Ovary (tissue), 10 donors: ENCODE measurements at regions of chr17 and their contacts with region 1.

Region 1: GRCh38 chr17:1621273-1622228 is 7.1 kb downstream of the SLC43A2 start:
- DNase-seq: no peak
- H3K4me3 ChIP-seq: no peak overlapping the region
- H3K27ac ChIP-seq: no peak overlapping the region
- H3K4me1 ChIP-seq: peaks cover 1% of the 10 kb centered on the region
- H3K27me3 ChIP-seq: no peaks in the 10 kb centered on the region
- CTCF ChIP-seq: no peak
- EP300 ChIP-seq: no peak
- POLR2A ChIP-seq: no peak

Region 2: GRCh38 chr17:1566545-1567199 is 54.9 kb before region 1 on chr17:
- intact Hi-C with region 1: no loop called
- DNase-seq: no peak
- H3K4me3 ChIP-seq: no peak overlapping the region
- H3K27ac ChIP-seq: no peak overlapping the region
- H3K4me1 ChIP-seq: no peaks in the 10 kb centered on the region
- H3K27me3 ChIP-seq: no peaks in the 10 kb centered on the region
- CTCF ChIP-seq: no peak
- EP300 ChIP-seq: no peak
- POLR2A ChIP-seq: no peak

Region 3: GRCh38 chr17:1580979-1581678 is 40.4 kb before region 1 on chr17:
- intact Hi-C with region 1: loop called in 1 of 4 experiments (anchors 2 kb)
- DNase-seq: no peak
- H3K4me3 ChIP-seq: no peak overlapping the region
- H3K27ac ChIP-seq: no peak overlapping the region
- H3K4me1 ChIP-seq: peaks cover 9% of the 10 kb centered on the region
- H3K27me3 ChIP-seq: no peaks in the 10 kb centered on the region
- CTCF ChIP-seq: no peak
- EP300 ChIP-seq: no peak
- POLR2A ChIP-seq: no peak

Region 4: DNA sequence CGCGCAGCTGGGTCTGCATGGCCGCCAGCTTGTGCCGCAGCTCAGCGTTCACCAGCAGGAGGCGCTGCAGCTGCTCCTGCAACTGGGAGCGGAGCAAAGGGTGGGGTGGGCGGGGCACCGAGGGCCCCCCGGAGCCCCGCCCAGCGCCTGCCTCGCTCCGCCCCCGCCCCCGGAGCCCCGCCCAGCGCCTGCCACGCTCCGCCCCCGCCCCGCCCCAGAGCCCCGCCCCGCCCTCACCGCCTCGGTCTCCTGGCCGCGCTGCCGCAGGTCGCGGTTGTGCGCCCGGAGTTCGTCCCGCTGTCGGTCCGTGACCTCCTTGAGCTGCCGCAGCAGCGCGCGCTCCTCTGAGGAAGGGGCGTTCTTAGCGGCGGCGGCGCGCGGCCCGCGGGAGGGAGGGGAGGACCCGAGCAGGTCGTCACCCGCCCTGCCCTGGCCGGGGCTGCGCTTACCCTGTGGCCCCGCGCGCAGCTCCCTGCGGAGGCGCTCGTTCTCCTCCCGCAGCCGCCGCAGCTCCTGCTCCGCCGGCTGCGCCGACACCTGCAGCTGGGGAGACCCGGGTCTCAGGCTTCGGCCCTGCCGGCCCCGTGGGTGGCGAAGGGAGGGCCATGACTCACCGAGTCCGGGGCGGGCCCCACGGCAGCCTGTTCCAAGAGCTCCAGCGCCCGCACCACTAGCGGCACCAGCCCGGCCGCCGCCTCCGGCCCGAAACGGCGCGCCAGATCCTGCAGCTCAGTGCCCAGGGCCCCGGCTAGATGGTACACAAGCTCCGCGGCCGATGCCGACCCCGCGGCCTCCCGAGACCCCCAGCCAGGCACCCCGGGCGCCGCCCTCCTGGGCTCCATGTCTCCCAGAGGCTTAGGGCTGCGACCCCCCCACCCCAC is 27.7 kb after region 1 on chr17:
- intact Hi-C with region 1: no loop called
- DNase-seq: peak; percentile 92 to 97 (median 96)
- H3K4me3 ChIP-seq: peak overlapping the region; percentile 83
- H3K27ac ChIP-seq: peak overlapping the region; percentile 69 to 95
- H3K4me1 ChIP-seq: peaks cover 8% of the 10 kb centered on the region
- H3K27me3 ChIP-seq: no peaks in the 10 kb centered on the region
- CTCF ChIP-seq: peak in 2 of 3 donors; percentile 19 to 80
- EP300 ChIP-seq: no peak
- POLR2A ChIP-seq: peak; percentile 41

Region 5: GRCh38 chr17:1908699-1909309 is 287.3 kb after region 1 on chr17:
- intact Hi-C with region 1: no loop called
- DNase-seq: peak; percentile 62 to 75 (median 66)
- H3K4me3 ChIP-seq: no peak overlapping the region
- H3K27ac ChIP-seq: no peak overlapping the region
- H3K4me1 ChIP-seq: peaks cover 6% of the 10 kb centered on the region
- H3K27me3 ChIP-seq: no peaks in the 10 kb centered on the region
- CTCF ChIP-seq: peak; percentile 54 to 77 (median 63)
- EP300 ChIP-seq: no peak
- POLR2A ChIP-seq: no peak